ENCODE measurements at regions of chr4 and their contacts with region 1.

Region 1: GRCh38 chr4:128863312-128864075 is 54.0 kb downstream of the JADE1 start:
- DNase-seq: peak; percentile 75 to 92
- H3K4me3 ChIP-seq: no peak overlapping the region
- H3K27ac ChIP-seq: peak overlapping the region in 3 of 5 donors; percentile 1 to 40 (median 26)
- H3K4me1 ChIP-seq: peaks cover 9 to 49% (median 29%) of the 10 kb centered on the region in 4 donors
- H3K27me3 ChIP-seq: no peaks in the 10 kb centered on the region
- CTCF ChIP-seq: peak in 5 of 7 experiments; percentile 68 to 94 (median 83)
- EP300 ChIP-seq: no peak
- POLR2A ChIP-seq: no peak

Region 2: DNA sequence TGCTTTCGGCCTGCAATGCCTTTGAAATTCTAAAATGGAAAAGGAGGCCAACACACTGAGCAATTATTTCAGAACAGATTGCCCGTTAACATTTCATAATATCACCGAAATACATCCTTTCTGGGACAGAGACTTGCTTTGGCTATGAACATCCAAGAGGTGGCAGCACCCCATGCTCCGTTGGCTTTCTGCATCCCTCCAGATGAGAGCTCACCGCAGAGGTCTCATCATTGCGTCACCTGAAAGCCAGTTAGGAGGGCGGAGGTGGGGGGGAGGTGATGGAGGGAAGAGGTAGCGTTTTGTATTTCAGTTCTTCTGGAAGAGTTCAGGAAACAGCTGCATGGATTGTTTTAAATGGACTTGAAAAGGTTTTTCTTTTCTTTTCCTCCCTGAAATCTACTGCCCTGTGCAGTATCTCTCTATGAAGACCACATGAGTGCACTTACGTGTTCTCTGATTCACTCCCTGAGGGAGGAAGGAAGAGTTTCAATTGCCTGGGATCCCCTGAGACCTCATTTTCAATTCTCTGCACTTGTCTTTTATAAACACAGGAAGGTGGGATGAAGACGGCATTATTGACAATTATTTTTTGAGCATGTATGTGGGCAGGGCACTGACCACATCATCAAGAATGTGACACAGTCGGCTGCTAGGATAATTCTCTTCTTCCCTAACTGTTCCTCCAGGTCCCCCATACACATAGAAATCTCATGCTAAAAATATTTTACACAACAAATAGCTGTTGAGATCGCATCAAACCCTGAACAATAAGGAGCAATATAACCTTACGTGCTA is 409.0 kb before region 1 on chr4:
- intact Hi-C with region 1: loop called (anchors 10 kb)
- DNase-seq: peak; percentile 73 to 93
- H3K4me3 ChIP-seq: no peak overlapping the region
- H3K27ac ChIP-seq: peak overlapping the region in 2 of 5 donors; percentile 2 to 16
- H3K4me1 ChIP-seq: peaks cover 0 to 16% (median 8%) of the 10 kb centered on the region in 4 donors
- H3K27me3 ChIP-seq: no peaks in the 10 kb centered on the region
- CTCF ChIP-seq: peak in 5 of 7 experiments; percentile 56 to 77 (median 67)
- EP300 ChIP-seq: no peak
- POLR2A ChIP-seq: no peak

Region 3: DNA sequence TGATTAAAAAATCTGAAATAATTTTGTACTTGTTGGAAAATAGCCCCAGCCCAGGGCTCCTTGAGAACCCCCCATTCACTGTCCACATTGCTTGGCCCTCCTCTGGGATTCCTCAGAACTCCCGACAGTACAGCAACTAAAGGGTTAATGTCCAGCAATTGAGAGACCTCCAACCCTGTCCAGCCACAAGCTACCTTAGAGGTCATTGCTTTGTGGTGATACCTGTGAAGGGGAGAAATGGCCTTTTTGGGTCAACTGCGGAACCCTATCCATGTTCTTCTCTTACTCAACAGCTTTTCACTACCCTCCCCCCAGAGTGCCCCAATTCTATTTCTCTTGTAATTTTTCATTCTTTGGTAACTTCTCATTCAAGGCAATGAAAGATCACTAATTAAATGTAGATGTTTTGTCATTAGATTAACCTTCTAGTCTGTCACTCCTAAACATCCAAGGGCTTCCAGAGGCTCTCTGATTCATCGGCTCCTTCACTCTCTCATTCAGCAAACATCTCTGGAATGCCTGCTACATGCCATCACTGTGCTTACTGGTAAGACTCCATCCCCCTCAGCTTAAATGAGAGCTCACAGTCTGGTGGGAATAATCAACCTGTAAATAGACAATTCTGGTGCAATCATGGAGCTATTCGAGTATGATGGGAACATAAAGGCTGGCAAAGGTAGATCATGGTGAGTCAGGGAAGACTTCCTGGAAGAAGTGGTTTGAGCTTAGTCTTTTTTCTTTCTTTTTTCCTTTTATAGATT is 334.5 kb before region 1 on chr4:
- intact Hi-C with region 1: no loop called
- DNase-seq: peak in 1 of 2 donors; percentile 45
- H3K4me3 ChIP-seq: no peak overlapping the region
- H3K27ac ChIP-seq: peak overlapping the region in 4 of 5 donors; percentile 18 to 50 (median 32)
- H3K4me1 ChIP-seq: peaks cover 4 to 40% (median 21%) of the 10 kb centered on the region in 4 donors
- H3K27me3 ChIP-seq: no peaks in the 10 kb centered on the region
- CTCF ChIP-seq: no peak
- EP300 ChIP-seq: no peak
- POLR2A ChIP-seq: no peak

Region 4: GRCh38 chr4:128558896-128559679 is 304.4 kb before region 1 on chr4:
- intact Hi-C with region 1: loop called (anchors 10 kb)
- DNase-seq: peak in 1 of 2 donors; percentile 72
- H3K4me3 ChIP-seq: no peak overlapping the region
- H3K27ac ChIP-seq: peak overlapping the region; percentile 25 to 71 (median 64)
- H3K4me1 ChIP-seq: peaks cover 13 to 29% (median 17%) of the 10 kb centered on the region in 4 donors
- H3K27me3 ChIP-seq: no peaks in the 10 kb centered on the region
- CTCF ChIP-seq: no peak
- EP300 ChIP-seq: peak; percentile 28
- POLR2A ChIP-seq: no peak

Measured in stomach (tissue), 19 donors.